ENCODE measurements at regions of chr7 and their contacts with region 1.

Region 1: GRCh38 chr7:41696314-41696916 is 6.5 kb downstream of the INHBA start:
- H3K4me3 ChIP-seq: peak overlapping the region; percentile 33
- H3K27ac ChIP-seq: no peak overlapping the region; the same call in 1 of the 2 replicates
- H3K4me1 ChIP-seq: peaks cover 3% of the 10 kb centered on the region; the same call in 1 of the 2 replicates
- CTCF ChIP-seq: peak; percentile 61

Region 2: DNA sequence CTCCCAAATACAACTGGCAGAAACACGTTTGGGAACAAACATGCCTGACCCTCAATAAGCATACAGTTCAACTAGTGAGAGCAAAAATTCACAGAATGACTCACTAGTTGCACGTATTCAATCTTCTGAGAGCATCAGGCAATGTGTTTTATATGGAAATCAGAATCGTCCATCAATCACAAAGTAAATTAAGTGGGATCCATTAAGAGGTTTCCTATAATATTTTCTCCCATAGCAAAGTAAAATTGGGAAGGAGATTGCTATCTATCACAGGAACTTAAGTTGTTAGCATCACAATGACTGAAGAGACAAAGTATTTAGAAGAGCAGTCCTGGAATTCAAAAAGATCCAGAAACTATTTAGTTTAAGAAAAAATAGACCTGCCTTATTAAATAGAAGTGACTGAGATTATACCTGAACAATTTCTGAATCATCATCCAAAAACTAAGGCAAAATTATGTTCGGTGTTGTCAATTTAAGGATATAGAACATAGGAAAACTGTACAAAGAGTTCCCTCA is 21.9 kb before region 1 on chr7:
- CTCF ChIA-PET with region 1: no interaction called
- POLR2A ChIA-PET with region 1: no interaction called
- H3K4me3 ChIP-seq: no peak overlapping the region
- H3K27ac ChIP-seq: no peak overlapping the region
- H3K4me1 ChIP-seq: no peaks in the 10 kb centered on the region
- CTCF ChIP-seq: no peak

Region 3: GRCh38 chr7:41685684-41686083 is 10.7 kb before region 1 on chr7:
- CTCF ChIA-PET with region 1: interaction called, 13 read pairs
- POLR2A ChIA-PET with region 1: no interaction called
- H3K4me3 ChIP-seq: no peak overlapping the region
- H3K27ac ChIP-seq: no peak overlapping the region
- H3K4me1 ChIP-seq: no peaks in the 10 kb centered on the region
- CTCF ChIP-seq: no peak

Region 4: DNA sequence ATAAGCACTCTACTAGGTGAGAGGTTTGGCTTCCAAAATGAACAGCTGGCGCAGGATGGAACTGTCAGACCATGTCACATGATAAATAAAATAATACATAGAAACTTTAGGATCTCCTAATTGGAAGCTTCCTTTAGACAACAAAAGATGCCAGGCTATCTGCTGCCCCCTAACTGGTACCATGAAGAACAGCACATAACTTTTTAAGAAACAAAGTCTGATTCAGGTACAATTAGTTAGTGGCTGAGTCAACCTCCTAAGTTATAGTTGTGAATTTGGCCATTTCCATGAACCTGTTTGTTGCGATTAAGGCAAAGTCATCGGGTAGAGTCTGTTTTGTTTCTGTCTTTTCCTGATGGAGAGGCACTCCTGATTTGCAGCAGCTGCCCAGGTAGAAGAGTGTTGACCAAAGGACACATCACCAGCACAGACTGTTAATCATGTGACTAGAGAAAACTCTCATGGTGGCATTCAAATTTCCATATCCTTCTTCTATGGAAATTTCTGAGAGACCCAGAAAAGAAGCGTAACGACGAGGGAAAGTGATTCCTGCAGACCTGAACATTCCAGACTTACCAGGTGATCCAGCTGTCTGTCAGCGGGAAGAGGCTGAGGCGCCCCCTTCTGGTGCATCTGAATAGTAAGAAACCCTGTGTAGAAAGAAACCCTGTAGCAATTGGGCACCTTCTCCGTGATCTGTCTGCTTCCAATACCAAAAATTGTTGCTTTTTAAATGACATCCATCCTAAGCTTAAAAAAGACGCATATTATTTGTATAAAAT is 15.1 kb after region 1 on chr7:
- CTCF ChIA-PET with region 1: interaction called, 15 read pairs
- POLR2A ChIA-PET with region 1: no interaction called
- H3K4me3 ChIP-seq: no peak overlapping the region
- H3K27ac ChIP-seq: no peak overlapping the region
- H3K4me1 ChIP-seq: no peaks in the 10 kb centered on the region
- CTCF ChIP-seq: no peak

Region 5: DNA sequence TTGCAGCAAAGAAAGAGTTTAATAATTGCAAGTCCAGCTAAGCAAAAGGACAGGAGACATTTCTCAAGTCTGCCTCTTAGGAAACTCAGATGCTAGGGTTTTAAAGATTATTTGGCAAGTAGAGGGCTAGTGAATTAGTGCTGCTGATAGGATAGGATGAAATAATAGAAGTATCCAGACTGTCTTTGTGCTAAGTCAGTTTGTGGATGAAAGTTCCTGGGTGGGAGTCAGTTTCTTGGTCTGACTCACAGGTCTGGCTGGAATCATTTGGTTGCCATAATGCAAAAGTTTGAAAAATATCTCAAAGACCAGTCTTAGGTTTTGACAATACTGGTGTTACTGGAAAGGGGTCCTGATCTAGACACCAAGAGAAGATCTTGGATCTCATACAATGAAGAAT is 49.0 kb after region 1 on chr7:
- CTCF ChIA-PET with region 1: no interaction called
- POLR2A ChIA-PET with region 1: no interaction called
- H3K4me3 ChIP-seq: no peak overlapping the region
- H3K27ac ChIP-seq: no peak overlapping the region
- H3K4me1 ChIP-seq: no peaks in the 10 kb centered on the region
- CTCF ChIP-seq: no peak